Lower leg skin (tissue), 4 donors: ENCODE measurements at regions of chr12 and their contacts with region 1.

Region 1: GRCh38 chr12:949453-950191 is at the start of gene RAD52:
- DNase-seq: peak; percentile 97 to 99
- H3K4me3 ChIP-seq: peak within 1 kb of the TSS; percentile 79
- CTCF ChIP-seq: peak in 1 of 3 donors; percentile 91
- POLR2A ChIP-seq: peak in 1 of 2 donors; percentile 41
- total RNA-seq, gene RAD52: 6.2 to 16.7 (median 12.1) TPM

Region 2: DNA sequence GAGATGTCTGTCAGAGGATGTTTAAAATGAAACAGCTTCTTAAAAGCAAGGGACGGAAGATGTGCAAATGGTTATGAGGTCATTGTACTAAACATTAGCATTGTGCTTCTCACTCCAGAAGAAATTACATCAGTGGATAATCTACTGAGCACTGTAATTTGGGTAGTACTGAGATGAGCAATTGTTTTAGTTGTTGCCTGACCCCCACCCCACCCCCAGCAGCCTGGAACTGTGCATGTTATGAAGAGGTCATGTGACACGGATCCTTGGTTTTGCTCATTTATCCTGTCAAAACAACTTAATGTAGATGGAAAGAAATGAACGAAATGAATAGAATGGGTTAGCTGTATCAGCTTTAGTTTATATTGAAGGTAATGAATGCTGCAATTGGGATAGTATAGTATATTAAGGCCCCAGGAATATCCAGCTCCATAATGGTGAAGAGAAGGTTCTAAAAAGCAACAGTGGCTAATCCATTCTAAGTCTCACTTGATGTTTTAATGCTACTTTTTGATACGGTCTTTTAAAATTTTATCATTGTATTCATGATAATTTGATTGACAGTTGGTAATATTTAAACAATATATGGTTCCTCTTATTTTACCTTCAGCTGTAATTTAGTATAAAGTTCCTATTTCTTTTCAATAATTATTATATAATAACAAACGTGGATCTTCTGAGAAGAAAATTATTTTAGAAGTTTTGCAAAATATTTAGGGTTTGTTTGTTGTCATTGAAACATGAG is 138.8 kb before region 1 on chr12:
- intact Hi-C with region 1: loop called (anchors 10 kb)
- DNase-seq: no peak
- H3K4me3 ChIP-seq: no peak overlapping the region
- CTCF ChIP-seq: no peak
- POLR2A ChIP-seq: no peak

Region 3: GRCh38 chr12:1130164-1130563 is 180.5 kb after region 1 on chr12:
- intact Hi-C with region 1: no loop called
- DNase-seq: no peak
- H3K4me3 ChIP-seq: no peak overlapping the region
- CTCF ChIP-seq: no peak
- POLR2A ChIP-seq: no peak